Activated CD8-positive, alpha-beta T cell treated with anti-CD3 and anti-CD28 coated beads for 36 hours (primary cell): ENCODE measurements at regions of chr17 and their contacts with region 1.

Region 1: GRCh38 chr17:63549946-63550807 is at the start of gene DCAF7:
- DNase-seq: peak; percentile 100
- ATAC-seq: peak; percentile 96
- H3K4me3 Mint-ChIP-seq: peak within 1 kb of the TSS; percentile 92
- H3K27ac Mint-ChIP-seq: peak within 1 kb of the TSS; percentile 96
- H3K4me1 Mint-ChIP-seq: peaks cover 32% of the 10 kb centered on the region
- H3K27me3 Mint-ChIP-seq: no peaks in the 10 kb centered on the region
- CTCF ChIP-seq: no peak
- total RNA-seq, gene DCAF7: 104 to 105 TPM

Region 2: DNA sequence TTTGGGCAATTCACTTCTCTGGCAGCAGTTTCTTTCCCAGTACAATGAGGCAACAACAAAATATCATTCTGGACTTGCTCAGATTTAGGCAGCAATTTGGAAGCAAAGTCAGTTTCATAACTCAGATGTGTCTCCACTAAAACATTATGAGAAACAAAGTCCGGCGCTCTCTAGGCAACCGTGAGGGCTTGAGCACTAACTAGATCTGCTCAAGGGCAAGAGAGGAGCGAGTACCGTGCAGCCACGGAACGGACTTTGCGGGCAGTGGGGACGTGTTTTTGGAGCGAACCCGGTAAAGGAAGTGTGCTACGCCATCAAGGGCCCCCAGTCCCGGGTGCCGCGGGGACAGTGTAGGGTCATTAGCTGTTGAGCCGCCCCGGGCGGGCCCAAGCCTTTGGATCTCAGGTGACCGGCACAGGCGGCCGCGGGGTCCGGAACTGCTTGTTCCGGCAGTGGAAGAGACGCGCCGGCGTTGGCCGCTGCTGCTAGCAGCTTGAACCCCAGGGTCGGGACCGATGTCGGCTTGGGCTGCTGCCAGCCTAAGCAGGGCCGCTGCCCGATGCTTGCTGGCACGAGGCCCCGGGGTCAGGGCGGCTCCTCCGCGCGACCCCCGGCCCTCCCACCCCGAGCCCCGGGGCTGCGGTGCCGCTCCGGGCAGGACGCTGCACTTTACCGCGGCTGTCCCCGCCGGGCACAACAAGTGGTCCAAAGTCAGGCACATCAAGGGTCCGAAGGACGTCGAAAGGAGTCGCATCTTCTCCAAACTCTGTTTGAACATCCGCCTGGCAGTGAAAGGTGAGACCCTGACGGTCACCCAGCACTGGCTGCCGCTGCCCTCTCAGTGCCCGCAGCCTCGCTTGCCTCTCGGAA is 50.6 kb after region 1 on chr17 and contains the start of gene TACO1:
- CTCF ChIA-PET with region 1: no interaction called
- POLR2A ChIA-PET with region 1: interaction called, 19 read pairs
- intact Hi-C with region 1: loop called (anchors 5 kb)
- DNase-seq: peak; percentile 83
- ATAC-seq: peak; percentile 95
- H3K4me3 Mint-ChIP-seq: peak within 1 kb of the TSS; percentile 95
- H3K27ac Mint-ChIP-seq: peak within 1 kb of the TSS; percentile 92
- H3K4me1 Mint-ChIP-seq: peaks cover 35% of the 10 kb centered on the region
- H3K27me3 Mint-ChIP-seq: no peaks in the 10 kb centered on the region
- CTCF ChIP-seq: no peak
- total RNA-seq, gene TACO1: 27.0 to 30.4 TPM

Region 3: DNA sequence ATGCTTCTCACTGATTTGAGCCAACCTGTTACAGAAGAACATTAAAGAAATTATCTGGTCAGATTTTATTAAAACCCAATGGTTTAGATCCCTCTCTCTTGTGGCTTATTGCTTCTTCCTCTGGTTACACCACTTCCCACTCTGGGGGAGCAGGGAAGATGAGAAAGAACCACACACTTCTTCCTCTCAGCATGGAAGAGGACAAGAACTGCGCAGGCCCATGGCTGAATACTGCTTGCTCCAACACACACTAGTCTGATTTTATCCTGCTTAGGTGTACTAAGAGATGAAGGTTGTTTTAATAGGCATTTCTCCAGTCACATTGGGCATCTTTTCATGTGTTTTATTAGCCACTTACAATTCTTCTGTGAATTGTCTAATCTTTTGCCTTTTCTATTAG is 99.6 kb after region 1 on chr17:
- CTCF ChIA-PET with region 1: no interaction called
- POLR2A ChIA-PET with region 1: no interaction called
- intact Hi-C with region 1: no loop called
- DNase-seq: no peak
- ATAC-seq: no peak
- H3K4me3 Mint-ChIP-seq: no peak overlapping the region
- H3K27ac Mint-ChIP-seq: no peak overlapping the region
- H3K4me1 Mint-ChIP-seq: peaks cover 13% of the 10 kb centered on the region
- H3K27me3 Mint-ChIP-seq: no peaks in the 10 kb centered on the region
- CTCF ChIP-seq: no peak